ENCODE measurements at regions of chr14 and their contacts with region 1.

Region 1: GRCh38 chr14:35404449-35405303 is at the start of gene NFKBIA:
- DNase-seq: peak; percentile 95
- ATAC-seq: peak; percentile 69
- H3K4me3 Mint-ChIP-seq: peak within 1 kb of the TSS; percentile 94
- H3K27ac Mint-ChIP-seq: peak within 1 kb of the TSS; percentile 97
- H3K4me1 Mint-ChIP-seq: peaks cover 30% of the 10 kb centered on the region
- H3K27me3 Mint-ChIP-seq: no peaks in the 10 kb centered on the region
- CTCF ChIP-seq: no peak
- total RNA-seq, gene NFKBIA: 218 to 227 TPM

Region 2: DNA sequence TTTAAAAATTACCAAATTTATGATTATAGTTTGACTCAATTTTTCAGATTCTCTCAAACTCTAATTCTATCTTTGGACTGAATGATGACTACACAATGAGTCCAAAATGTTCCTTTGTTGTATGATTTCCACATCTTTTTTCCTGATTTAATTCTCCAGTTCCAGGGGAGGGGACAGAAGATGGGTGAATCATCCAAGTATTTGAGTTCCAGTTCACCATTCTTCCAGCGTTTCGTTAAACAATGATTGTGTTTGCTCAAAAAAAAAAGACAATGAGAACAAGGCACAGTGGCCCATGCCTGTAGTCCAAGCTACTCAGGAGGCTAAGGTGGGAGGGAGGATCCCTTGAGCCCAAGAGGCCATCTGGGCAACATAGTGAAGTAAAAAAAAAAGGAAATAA is 553.3 kb before region 1 on chr14:
- CTCF ChIA-PET with region 1: no interaction called
- POLR2A ChIA-PET with region 1: no interaction called
- intact Hi-C with region 1: no loop called
- DNase-seq: no peak
- ATAC-seq: no peak
- H3K4me3 Mint-ChIP-seq: no peak overlapping the region
- H3K27ac Mint-ChIP-seq: no peak overlapping the region
- H3K4me1 Mint-ChIP-seq: peaks cover 20% of the 10 kb centered on the region
- H3K27me3 Mint-ChIP-seq: no peaks in the 10 kb centered on the region
- CTCF ChIP-seq: no peak

Region 3: DNA sequence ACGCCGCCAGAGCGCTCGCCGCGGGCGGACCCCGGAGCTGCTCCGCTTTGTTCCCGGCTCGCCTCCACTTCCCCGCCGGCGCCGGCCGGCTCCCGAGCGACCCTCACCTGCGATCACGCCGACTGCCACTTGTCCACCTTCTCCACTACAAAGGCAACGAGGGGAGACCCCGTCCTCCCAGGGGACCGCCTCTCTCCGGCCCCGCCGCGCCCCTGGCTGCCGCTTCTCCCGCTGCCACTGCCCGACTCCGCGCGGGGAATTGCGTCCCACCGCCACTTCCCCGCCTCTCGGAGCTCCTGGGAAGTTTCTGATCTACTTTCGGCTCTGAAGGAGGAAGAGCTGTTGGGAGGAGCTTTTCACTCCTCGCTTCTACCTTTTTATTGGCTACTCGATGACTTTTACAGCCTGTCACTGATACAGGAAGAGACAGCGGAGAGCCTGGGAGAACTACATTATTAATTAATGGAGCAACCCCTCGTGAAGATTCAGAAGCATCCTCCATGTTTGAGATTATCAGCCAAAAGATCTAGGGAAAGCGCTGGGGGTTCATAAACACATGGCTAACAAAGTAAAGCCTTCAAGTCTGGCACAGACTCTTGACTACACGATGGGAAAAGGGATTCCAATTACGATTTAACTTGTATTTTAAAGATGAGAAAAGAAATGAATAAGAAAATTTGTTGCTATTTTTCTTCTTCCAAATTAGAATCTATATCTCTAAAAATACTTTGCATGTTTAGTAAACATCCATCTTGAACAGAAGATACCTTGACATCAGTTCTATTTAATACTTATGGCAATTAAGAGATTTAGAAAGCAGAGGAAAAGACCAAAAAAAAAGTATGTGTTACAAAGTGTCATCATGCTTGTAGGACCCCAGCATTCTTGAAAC is 529.4 kb before region 1 on chr14 and contains the start of gene BAZ1A:
- CTCF ChIA-PET with region 1: no interaction called
- POLR2A ChIA-PET with region 1: interaction called, 13 read pairs
- intact Hi-C with region 1: no loop called
- DNase-seq: peak; percentile 40
- ATAC-seq: no peak
- H3K4me3 Mint-ChIP-seq: peak within 1 kb of the TSS; percentile 100
- H3K27ac Mint-ChIP-seq: peak within 1 kb of the TSS; percentile 100
- H3K4me1 Mint-ChIP-seq: peaks cover 29% of the 10 kb centered on the region
- H3K27me3 Mint-ChIP-seq: no peaks in the 10 kb centered on the region
- CTCF ChIP-seq: no peak
- total RNA-seq, gene BAZ1A: 47.4 to 49.4 TPM

Region 4: DNA sequence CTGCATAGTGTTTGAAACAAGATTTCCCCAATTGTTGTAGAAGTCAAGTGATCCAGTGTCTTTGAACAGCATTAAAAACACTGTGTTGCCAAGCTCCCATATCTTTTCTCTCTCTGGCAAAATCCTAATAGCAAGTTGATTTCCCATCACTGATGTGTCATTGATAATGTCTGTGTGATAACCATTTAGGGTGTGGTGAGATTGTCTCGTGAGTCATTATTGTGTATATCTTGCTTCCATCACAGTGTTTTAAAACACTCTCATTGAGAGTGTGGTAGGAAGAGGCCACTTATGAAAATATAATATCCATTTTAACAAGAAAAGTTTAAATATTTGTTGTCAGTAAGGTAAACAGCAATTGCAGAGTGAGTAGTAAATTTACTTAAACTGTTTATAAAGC is 207.7 kb before region 1 on chr14:
- CTCF ChIA-PET with region 1: no interaction called
- POLR2A ChIA-PET with region 1: no interaction called
- intact Hi-C with region 1: no loop called
- DNase-seq: no peak
- ATAC-seq: peak; percentile 53
- H3K4me3 Mint-ChIP-seq: no peak overlapping the region
- H3K27ac Mint-ChIP-seq: peak overlapping the region; percentile 58
- H3K4me1 Mint-ChIP-seq: peaks cover 26% of the 10 kb centered on the region
- H3K27me3 Mint-ChIP-seq: no peaks in the 10 kb centered on the region
- CTCF ChIP-seq: no peak

Region 5: GRCh38 chr14:35229495-35230089 is 175.1 kb before region 1 on chr14:
- CTCF ChIA-PET with region 1: interaction called, 36 read pairs
- POLR2A ChIA-PET with region 1: interaction called, 11 read pairs
- intact Hi-C with region 1: loop called (anchors 1 kb)
- DNase-seq: no peak
- ATAC-seq: peak; percentile 74
- H3K4me3 Mint-ChIP-seq: no peak overlapping the region
- H3K27ac Mint-ChIP-seq: no peak overlapping the region
- H3K4me1 Mint-ChIP-seq: peaks cover 16% of the 10 kb centered on the region
- H3K27me3 Mint-ChIP-seq: no peaks in the 10 kb centered on the region
- CTCF ChIP-seq: peak; percentile 65

Region 6: GRCh38 chr14:35301735-35302528 is 102.7 kb before region 1 on chr14:
- CTCF ChIA-PET with region 1: interaction called, 4 read pairs
- POLR2A ChIA-PET with region 1: interaction called, 222 read pairs
- intact Hi-C with region 1: no loop called
- DNase-seq: no peak
- ATAC-seq: peak; percentile 63
- H3K4me3 Mint-ChIP-seq: peak overlapping the region; percentile 24
- H3K27ac Mint-ChIP-seq: peak overlapping the region; percentile 77
- H3K4me1 Mint-ChIP-seq: peaks cover 55% of the 10 kb centered on the region
- H3K27me3 Mint-ChIP-seq: no peaks in the 10 kb centered on the region
- CTCF ChIP-seq: no peak

Region 7: DNA sequence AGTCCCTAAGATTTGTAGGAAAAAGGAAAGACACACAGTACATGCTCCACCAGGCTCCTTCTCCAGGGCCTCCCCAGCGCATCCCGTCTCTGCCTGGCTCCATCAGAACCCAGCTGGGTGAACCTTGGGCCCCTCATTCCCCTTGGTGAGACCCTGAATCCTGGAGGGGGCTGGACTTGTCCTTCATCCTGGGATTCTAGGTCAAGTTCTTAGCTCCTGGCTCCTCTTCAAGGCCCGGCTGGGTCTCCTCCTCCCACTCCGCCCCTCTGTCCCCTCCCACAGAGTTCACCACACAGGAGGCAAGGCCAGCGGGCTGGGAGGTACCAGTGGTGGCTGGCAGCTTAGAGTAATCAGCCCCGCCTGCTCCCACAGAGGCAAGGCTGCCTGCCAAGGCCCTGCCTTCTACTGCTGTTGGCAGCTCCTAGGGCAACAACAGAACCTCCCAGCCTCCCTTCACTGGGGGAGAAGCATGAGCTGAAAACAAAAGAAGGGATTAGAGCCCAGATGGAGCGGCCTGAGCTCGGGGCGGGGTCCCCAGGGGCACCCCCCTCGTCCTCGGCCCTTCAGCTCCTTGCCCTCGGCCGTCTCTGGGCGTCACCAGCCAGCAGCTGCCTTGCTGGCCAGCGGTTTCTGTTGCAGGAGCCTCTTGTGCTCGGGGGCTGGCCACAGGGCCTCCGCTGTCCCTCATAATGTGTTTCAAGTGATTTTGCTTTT is 63.1 kb before region 1 on chr14:
- CTCF ChIA-PET with region 1: interaction called, 3 read pairs
- POLR2A ChIA-PET with region 1: interaction called, 157 read pairs
- intact Hi-C with region 1: no loop called
- DNase-seq: peak; percentile 63
- ATAC-seq: peak; percentile 86
- H3K4me3 Mint-ChIP-seq: peak overlapping the region; percentile 26
- H3K27ac Mint-ChIP-seq: no peak overlapping the region
- H3K4me1 Mint-ChIP-seq: peaks cover 35% of the 10 kb centered on the region
- H3K27me3 Mint-ChIP-seq: no peaks in the 10 kb centered on the region
- CTCF ChIP-seq: no peak

Region 8: GRCh38 chr14:35390577-35391387 is 13.9 kb before region 1 on chr14:
- CTCF ChIA-PET with region 1: interaction called, 4 read pairs
- POLR2A ChIA-PET with region 1: interaction called, 50 read pairs
- intact Hi-C with region 1: no loop called
- DNase-seq: peak; percentile 48
- ATAC-seq: peak; percentile 80
- H3K4me3 Mint-ChIP-seq: no peak overlapping the region
- H3K27ac Mint-ChIP-seq: no peak overlapping the region
- H3K4me1 Mint-ChIP-seq: peaks cover 7% of the 10 kb centered on the region
- H3K27me3 Mint-ChIP-seq: no peaks in the 10 kb centered on the region
- CTCF ChIP-seq: no peak

Region 9: GRCh38 chr14:35444104-35444503 is 39.4 kb after region 1 on chr14:
- CTCF ChIA-PET with region 1: no interaction called
- POLR2A ChIA-PET with region 1: no interaction called
- intact Hi-C with region 1: no loop called
- DNase-seq: no peak
- ATAC-seq: no peak
- H3K4me3 Mint-ChIP-seq: no peak overlapping the region
- H3K27ac Mint-ChIP-seq: no peak overlapping the region
- H3K4me1 Mint-ChIP-seq: no peaks in the 10 kb centered on the region
- H3K27me3 Mint-ChIP-seq: no peaks in the 10 kb centered on the region
- CTCF ChIP-seq: no peak

Region 10: DNA sequence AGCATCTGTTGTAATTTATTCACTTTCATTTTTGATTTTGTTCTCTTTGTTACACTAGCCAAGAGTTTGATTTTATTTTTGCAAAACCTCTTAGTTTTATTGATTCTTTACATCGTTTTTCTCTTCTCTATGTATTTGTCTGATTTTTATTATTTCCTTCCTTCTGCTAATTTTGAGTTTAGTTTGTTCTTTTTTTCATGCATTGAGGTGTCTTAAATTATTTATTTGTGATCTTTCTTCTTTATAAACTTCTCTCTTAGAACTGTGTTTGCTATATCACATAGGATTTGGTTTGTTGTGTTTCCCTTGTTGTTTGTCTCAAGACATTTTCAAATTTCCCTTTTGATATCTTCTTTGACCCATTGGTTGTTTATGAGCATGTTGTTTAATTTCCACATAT is 51.6 kb after region 1 on chr14:
- CTCF ChIA-PET with region 1: no interaction called
- POLR2A ChIA-PET with region 1: no interaction called
- intact Hi-C with region 1: no loop called
- DNase-seq: no peak
- ATAC-seq: no peak
- H3K4me3 Mint-ChIP-seq: no peak overlapping the region
- H3K27ac Mint-ChIP-seq: no peak overlapping the region
- H3K4me1 Mint-ChIP-seq: no peaks in the 10 kb centered on the region
- H3K27me3 Mint-ChIP-seq: peaks cover 6% of the 10 kb centered on the region
- CTCF ChIP-seq: no peak